ENCODE measurements at regions of chr12 and their contacts with region 1.

Region 1: GRCh38 chr12:121773011-121773777 is 20.3 kb downstream of the RHOF start:
- DNase-seq: no peak
- ATAC-seq: peak; percentile 91
- H3K4me3 ChIP-seq: no peak overlapping the region
- H3K27ac ChIP-seq: no peak overlapping the region
- H3K4me1 ChIP-seq: peaks cover 7% of the 10 kb centered on the region; the same call in 1 of the 2 replicates
- H3K27me3 ChIP-seq: no peaks in the 10 kb centered on the region
- CTCF ChIP-seq: peak; percentile 92 to 95 (median 94); a peak in 5 of 6 replicates
- EP300 ChIP-seq: no peak
- POLR2A ChIP-seq: no peak
- RAD21 ChIP-seq: peak; percentile 97

Region 2: GRCh38 chr12:121697098-121697698 is 76.0 kb before region 1 on chr12:
- CTCF ChIA-PET with region 1: interaction called, 26 read pairs
- POLR2A ChIA-PET with region 1: interaction called, 3 read pairs
- RAD21 ChIA-PET with region 1: no interaction called
- SMC1A ChIA-PET with region 1: interaction called, 11 read pairs
- in situ Hi-C with region 1: loop called (anchors 5 kb)
- intact Hi-C with region 1: loop called (anchors 1 kb)
- DNase-seq: no peak
- ATAC-seq: peak; percentile 40; the same call in 1 of the 3 replicates
- H3K4me3 ChIP-seq: no peak overlapping the region
- H3K27ac ChIP-seq: no peak overlapping the region
- H3K4me1 ChIP-seq: no peaks in the 10 kb centered on the region
- H3K27me3 ChIP-seq: no peaks in the 10 kb centered on the region
- CTCF ChIP-seq: peak in 2 of 3 experiments; percentile 35 to 60; a peak in 4 of 6 replicates
- EP300 ChIP-seq: no peak
- POLR2A ChIP-seq: no peak
- RAD21 ChIP-seq: peak; percentile 71

Region 3: GRCh38 chr12:121712461-121713256 is 60.5 kb before region 1 on chr12 and contains the start of gene TMEM120B:
- CTCF ChIA-PET with region 1: interaction called, 19 read pairs
- POLR2A ChIA-PET with region 1: no interaction called
- RAD21 ChIA-PET with region 1: interaction called, 9 read pairs
- SMC1A ChIA-PET with region 1: interaction called, 6 read pairs
- in situ Hi-C with region 1: no loop called
- intact Hi-C with region 1: no loop called
- DNase-seq: no peak
- ATAC-seq: peak; percentile 86
- H3K4me3 ChIP-seq: peak within 1 kb of the TSS; percentile 85
- H3K27ac ChIP-seq: peak within 1 kb of the TSS; percentile 32
- H3K4me1 ChIP-seq: peaks cover 16% of the 10 kb centered on the region; the same call in 1 of the 2 replicates
- H3K27me3 ChIP-seq: no peaks in the 10 kb centered on the region
- CTCF ChIP-seq: peak in 2 of 3 experiments; percentile 19 to 31; a peak in 2 of 6 replicates
- EP300 ChIP-seq: no peak
- POLR2A ChIP-seq: peak; percentile 88
- RAD21 ChIP-seq: no peak
- polyA plus RNA-seq, gene TMEM120B: 11.3 to 26.2 TPM

Region 4: GRCh38 chr12:121733849-121734248 is 39.3 kb before region 1 on chr12:
- CTCF ChIA-PET with region 1: no interaction called
- POLR2A ChIA-PET with region 1: no interaction called
- RAD21 ChIA-PET with region 1: no interaction called
- SMC1A ChIA-PET with region 1: no interaction called
- in situ Hi-C with region 1: no loop called
- intact Hi-C with region 1: no loop called
- DNase-seq: no peak
- ATAC-seq: no peak
- H3K4me3 ChIP-seq: no peak overlapping the region
- H3K27ac ChIP-seq: no peak overlapping the region
- H3K4me1 ChIP-seq: no peaks in the 10 kb centered on the region
- H3K27me3 ChIP-seq: no peaks in the 10 kb centered on the region
- CTCF ChIP-seq: no peak
- EP300 ChIP-seq: no peak
- POLR2A ChIP-seq: no peak
- RAD21 ChIP-seq: no peak

Region 5: DNA sequence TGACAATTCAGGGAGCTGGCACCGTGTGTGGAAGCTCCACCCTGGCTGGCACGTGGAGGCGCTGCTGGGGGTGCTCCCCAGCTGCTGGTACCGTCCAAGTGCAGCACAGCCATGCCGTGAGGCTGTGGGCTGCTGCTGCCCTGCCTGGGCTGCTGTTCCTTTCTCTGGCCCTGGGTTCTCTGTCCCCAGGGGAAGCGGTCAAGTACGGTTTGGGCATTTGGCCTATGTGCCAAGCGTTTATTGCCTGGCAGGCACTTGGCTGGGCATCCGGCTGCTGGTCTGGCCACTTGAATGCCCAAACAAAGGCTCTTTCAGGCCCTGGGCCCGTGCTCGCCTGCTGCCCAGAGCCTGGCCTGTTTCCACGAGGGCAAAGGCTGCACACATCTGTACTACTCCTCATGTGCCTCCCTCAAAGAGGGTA is 19.3 kb before region 1 on chr12:
- CTCF ChIA-PET with region 1: no interaction called
- POLR2A ChIA-PET with region 1: no interaction called
- RAD21 ChIA-PET with region 1: no interaction called
- SMC1A ChIA-PET with region 1: no interaction called
- in situ Hi-C with region 1: no loop called
- intact Hi-C with region 1: no loop called
- DNase-seq: no peak
- ATAC-seq: no peak
- H3K4me3 ChIP-seq: no peak overlapping the region
- H3K27ac ChIP-seq: no peak overlapping the region
- H3K4me1 ChIP-seq: no peaks in the 10 kb centered on the region
- H3K27me3 ChIP-seq: no peaks in the 10 kb centered on the region
- CTCF ChIP-seq: no peak
- EP300 ChIP-seq: no peak
- POLR2A ChIP-seq: no peak
- RAD21 ChIP-seq: no peak

Region 6: DNA sequence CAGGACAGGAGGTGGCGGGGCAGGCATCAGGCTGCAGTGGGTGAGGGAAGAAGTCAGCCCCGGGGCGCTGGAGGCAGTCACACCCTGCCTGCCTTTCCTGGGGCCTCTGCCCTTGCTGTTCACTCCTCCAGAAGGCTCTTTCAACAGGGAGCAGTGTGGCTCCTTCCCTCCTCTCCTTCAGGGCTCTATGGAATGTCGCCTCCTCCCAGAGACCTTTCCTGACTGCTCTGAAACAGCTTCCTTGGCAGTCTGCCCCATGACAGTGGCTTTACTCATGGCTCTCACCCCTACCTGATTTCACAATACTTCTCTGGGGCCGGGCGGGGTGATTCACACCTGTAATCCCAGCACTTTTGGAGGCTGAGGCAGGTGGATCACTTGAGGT is 13.2 kb after region 1 on chr12:
- CTCF ChIA-PET with region 1: interaction called, 492 read pairs
- POLR2A ChIA-PET with region 1: interaction called, 6 read pairs
- RAD21 ChIA-PET with region 1: interaction called, 230 read pairs
- SMC1A ChIA-PET with region 1: interaction called, 5 read pairs
- in situ Hi-C with region 1: no loop called
- intact Hi-C with region 1: no loop called
- DNase-seq: no peak
- ATAC-seq: no peak
- H3K4me3 ChIP-seq: no peak overlapping the region
- H3K27ac ChIP-seq: peak overlapping the region; percentile 90
- H3K4me1 ChIP-seq: peaks cover 82% of the 10 kb centered on the region
- H3K27me3 ChIP-seq: no peaks in the 10 kb centered on the region
- CTCF ChIP-seq: no peak
- EP300 ChIP-seq: no peak
- POLR2A ChIP-seq: no peak
- RAD21 ChIP-seq: no peak

Region 7: DNA sequence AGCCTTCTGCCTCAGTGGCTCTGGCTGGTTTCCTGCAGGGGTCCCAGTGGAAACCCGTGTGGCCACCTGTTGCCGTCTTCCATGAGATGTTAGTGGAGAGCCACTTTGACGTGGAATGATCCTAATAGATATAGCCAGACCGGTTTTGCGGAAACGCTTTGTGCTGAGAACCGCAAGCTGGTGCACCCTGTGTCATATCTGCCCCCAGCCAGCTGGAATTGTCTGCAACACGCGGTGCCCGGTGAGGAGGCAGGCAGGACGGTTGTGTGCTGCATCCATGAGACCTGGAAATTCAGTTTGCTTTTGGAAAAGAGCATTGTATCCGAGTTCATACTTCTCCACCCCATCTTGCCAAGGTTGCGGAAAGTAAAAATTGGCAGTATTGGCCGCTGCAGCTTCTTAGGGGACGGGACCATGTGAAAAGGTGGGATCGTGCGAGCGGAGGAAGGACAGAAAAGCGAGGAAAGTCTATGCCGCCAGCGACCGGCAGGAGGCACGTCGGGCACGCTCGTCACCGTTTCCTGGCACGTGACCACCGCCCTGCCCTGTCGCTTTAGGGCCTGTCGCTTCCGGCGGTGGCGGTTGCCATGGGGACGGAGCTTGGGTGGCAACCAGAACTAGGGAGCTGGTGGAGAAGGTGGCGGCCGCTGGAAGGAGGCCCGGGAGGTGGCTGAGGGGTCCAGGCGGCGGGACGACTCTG is 144.9 kb after region 1 on chr12 and contains the start of gene CFAP251:
- CTCF ChIA-PET with region 1: no interaction called
- POLR2A ChIA-PET with region 1: no interaction called
- RAD21 ChIA-PET with region 1: no interaction called
- SMC1A ChIA-PET with region 1: no interaction called
- in situ Hi-C with region 1: no loop called
- intact Hi-C with region 1: no loop called
- DNase-seq: peak; percentile 50
- ATAC-seq: peak; percentile 100
- H3K4me3 ChIP-seq: peak within 1 kb of the TSS; percentile 57
- H3K27ac ChIP-seq: peak within 1 kb of the TSS; percentile 13; the same call in 1 of the 2 replicates
- H3K4me1 ChIP-seq: peaks cover 8% of the 10 kb centered on the region; the same call in 1 of the 2 replicates
- H3K27me3 ChIP-seq: no peaks in the 10 kb centered on the region
- CTCF ChIP-seq: peak; percentile 60 to 79 (median 73)
- EP300 ChIP-seq: no peak; a peak in 1 of 4 replicates
- POLR2A ChIP-seq: peak; percentile 67
- RAD21 ChIP-seq: peak; percentile 48
- polyA plus RNA-seq, gene CFAP251: 0.27 to 0.42 TPM